BJ (cell line): ENCODE measurements at regions of chr3 and their contacts with region 1.

Region 1: DNA sequence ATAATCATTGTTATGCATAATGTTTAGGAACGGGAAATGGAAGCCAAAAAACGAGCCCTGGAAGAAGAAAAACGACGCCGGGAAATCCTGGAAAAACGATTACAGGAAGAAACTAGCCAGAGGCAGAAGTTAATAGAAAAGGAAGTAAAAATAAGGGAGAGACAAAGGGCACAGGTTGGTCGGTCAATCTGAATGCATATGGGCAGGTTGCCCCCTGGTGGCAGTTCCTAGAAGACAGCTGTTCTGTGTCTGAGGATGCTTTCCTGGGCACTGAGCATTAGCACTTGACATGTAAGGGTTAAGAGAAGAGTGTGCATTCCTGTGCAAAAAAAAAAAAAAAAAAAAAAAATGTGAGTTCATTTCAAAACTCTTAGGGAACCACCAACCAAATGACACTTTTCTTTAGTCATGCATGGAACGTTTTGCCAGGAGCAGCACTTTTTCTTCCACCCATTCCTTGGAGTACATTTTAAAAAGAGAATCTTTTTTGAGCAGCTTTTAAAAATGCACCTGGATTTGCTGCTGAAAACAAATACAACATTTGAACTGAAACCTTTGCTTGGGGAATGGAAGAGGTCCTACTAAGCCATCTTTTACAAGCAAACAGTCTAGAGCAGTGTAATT is 11.1 kb upstream of the ABHD10 start:
- DNase-seq: no peak
- H3K4me3 ChIP-seq: no peak overlapping the region
- H3K27me3 ChIP-seq: no peaks in the 10 kb centered on the region
- CTCF ChIP-seq: peak; percentile 81

Region 2: GRCh38 chr3:111751961-111752360 is 215.8 kb before region 1 on chr3:
- CTCF ChIA-PET with region 1: interaction called, 4 read pairs
- POLR2A ChIA-PET with region 1: interaction called, 15 read pairs
- DNase-seq: no peak
- H3K4me3 ChIP-seq: no peak overlapping the region
- H3K27me3 ChIP-seq: no peaks in the 10 kb centered on the region
- CTCF ChIP-seq: no peak

Region 3: DNA sequence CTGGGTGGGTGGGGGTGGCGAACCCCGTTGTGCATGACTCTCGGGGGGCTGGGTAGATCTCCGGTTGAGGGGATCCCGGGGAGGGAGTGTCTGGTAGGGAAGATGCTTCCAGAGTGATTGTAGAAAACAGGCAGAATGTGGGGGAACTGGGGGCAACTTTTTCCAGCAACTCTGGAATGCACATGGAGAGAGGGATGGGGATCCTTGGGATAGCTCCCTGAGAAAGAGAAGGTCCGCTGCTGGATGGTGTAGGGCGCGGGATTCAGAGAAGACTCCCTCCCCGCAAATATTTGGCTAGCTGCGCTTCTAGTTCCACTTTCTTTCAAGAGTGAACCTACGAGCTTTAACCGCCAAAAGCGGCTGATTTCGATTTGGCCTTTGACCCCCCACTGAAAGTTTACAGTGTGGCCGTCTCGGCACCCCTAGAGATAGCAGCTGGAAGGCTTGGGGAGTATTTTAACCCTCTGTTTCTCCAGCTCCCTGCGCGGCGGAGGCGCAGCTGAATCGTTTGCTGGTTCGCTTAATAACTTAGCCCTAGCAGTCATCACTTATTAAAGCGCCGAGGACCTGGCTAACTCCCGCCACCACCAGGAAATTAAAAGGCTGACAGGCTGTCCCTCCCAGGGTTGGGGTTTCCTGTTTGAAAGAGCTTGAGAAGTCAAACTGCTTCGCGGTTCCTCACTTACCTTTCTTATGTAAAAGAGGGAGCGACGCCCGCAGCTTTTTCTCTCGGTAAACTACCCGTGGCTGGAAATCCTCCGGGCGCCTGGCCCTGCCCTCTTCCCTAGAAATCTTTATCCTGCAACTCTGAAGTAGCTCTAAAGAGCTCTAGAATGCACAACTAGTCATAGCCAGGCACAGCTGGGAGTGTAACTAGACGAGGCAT is 107.5 kb before region 1 on chr3:
- CTCF ChIA-PET with region 1: interaction called, 44 read pairs
- POLR2A ChIA-PET with region 1: no interaction called
- DNase-seq: peak; percentile 64
- H3K4me3 ChIP-seq: peak overlapping the region; percentile 85
- H3K27me3 ChIP-seq: no peaks in the 10 kb centered on the region
- CTCF ChIP-seq: peak; percentile 66

Region 4: DNA sequence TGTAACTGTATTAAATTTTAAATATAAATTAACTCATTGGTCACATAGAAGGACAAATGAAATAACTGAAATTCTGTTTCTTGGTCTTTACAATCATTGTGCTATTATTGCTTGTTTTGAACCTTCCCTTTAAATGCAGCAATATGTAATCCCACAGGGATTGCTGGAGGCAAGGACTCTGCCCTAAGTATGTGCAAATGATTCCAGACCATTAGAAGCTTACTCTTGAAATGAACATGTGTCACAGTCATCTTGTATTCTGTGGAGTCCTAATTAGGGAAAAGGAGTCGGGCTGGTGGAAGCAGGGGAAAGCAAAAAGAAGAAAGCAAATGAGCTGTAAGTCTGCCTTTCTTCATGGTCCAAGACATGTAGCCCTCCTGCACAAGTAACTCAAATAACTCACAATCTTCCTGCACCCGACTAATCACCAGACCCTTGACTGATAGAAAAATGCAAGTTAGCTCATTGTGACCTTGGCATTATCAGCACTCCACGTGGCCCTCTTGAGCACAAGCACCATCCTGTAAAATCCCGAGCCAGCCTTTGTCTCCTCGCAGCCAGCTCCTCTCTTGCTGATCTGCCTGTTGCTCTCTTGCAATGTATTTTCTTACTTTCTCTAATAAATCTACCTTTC is 64.5 kb after region 1 on chr3:
- CTCF ChIA-PET with region 1: no interaction called
- POLR2A ChIA-PET with region 1: no interaction called
- DNase-seq: no peak
- H3K4me3 ChIP-seq: no peak overlapping the region
- H3K27me3 ChIP-seq: no peaks in the 10 kb centered on the region
- CTCF ChIP-seq: no peak

Region 5: DNA sequence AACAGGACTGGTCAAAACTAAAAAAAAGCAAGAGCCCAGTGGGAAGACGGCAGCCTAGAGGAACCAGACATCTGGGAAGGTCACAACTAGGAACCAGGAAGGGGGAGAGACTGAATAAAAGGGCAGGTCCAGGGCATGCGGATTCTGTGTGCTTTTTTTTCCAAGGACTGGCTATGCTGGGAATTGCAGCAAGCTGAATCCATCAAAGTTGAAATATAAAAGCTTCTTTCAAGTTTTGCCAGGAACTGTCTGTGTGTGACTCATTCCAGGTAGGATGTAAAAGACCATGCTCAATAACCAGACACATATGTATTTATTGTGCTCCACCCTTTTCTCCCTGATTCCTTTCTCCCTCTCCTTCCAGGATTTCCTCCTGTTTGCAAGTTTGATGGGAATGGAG is 721.1 kb after region 1 on chr3:
- CTCF ChIA-PET with region 1: no interaction called
- POLR2A ChIA-PET with region 1: no interaction called
- DNase-seq: no peak
- H3K4me3 ChIP-seq: no peak overlapping the region
- H3K27me3 ChIP-seq: no peaks in the 10 kb centered on the region
- CTCF ChIP-seq: no peak